Activated T-helper 2 cell treated with anti-CD3 and anti-CD28 coated beads, Interferon-gamma antibody, Interleukin-2, Interleukin-4, amounts not matched to agents 10 μg/mL and 5 μg/mL and 100 μg/mL, durations not matched to agents 14 hours and 24 hours and 36 hours (primary cell): ENCODE measurements at regions of chrX and their contacts with region 1.

Region 1: GRCh38 chrX:65866146-65866545 is 173.7 kb downstream of the VSIG4 start:
- DNase-seq: peak; percentile 11
- H3K4me3 Mint-ChIP-seq: no peak overlapping the region
- H3K27ac Mint-ChIP-seq: peak overlapping the region; percentile 38
- H3K4me1 Mint-ChIP-seq: peaks cover 21% of the 10 kb centered on the region
- H3K27me3 Mint-ChIP-seq: no peaks in the 10 kb centered on the region

Region 2: GRCh38 chrX:65750674-65751469 is 115.3 kb before region 1 on chrX:
- intact Hi-C with region 1: loop called (anchors 5 kb)
- DNase-seq: peak; percentile 26
- H3K4me3 Mint-ChIP-seq: peak overlapping the region; percentile 1
- H3K27ac Mint-ChIP-seq: no peak overlapping the region
- H3K4me1 Mint-ChIP-seq: peaks cover 48% of the 10 kb centered on the region
- H3K27me3 Mint-ChIP-seq: no peaks in the 10 kb centered on the region

Region 3: GRCh38 chrX:65920659-65921066 is 54.5 kb after region 1 on chrX:
- intact Hi-C with region 1: loop called (anchors 5 kb)
- DNase-seq: no peak
- H3K4me3 Mint-ChIP-seq: no peak overlapping the region
- H3K27ac Mint-ChIP-seq: no peak overlapping the region
- H3K4me1 Mint-ChIP-seq: peaks cover 34% of the 10 kb centered on the region
- H3K27me3 Mint-ChIP-seq: no peaks in the 10 kb centered on the region